Breast epithelium (tissue), 4 donors: ENCODE measurements at regions of chr5 and their contacts with region 1.

Region 1: GRCh38 chr5:163564321-163564938 is 59.0 kb downstream of the MAT2B start:
- DNase-seq: peak in 1 of 2 donors; percentile 38
- H3K4me3 ChIP-seq: no peak overlapping the region
- H3K27ac ChIP-seq: no peak overlapping the region
- H3K4me1 ChIP-seq: no peaks in the 10 kb centered on the region
- H3K27me3 ChIP-seq: no peaks in the 10 kb centered on the region
- CTCF ChIP-seq: peak; percentile 76 to 85 (median 78)
- POLR2A ChIP-seq: no peak

Region 2: GRCh38 chr5:163467644-163468355 is 96.6 kb before region 1 on chr5:
- intact Hi-C with region 1: loop called (anchors 5 kb)
- DNase-seq: no peak
- H3K4me3 ChIP-seq: no peak overlapping the region
- H3K27ac ChIP-seq: no peak overlapping the region
- H3K4me1 ChIP-seq: no peaks in the 10 kb centered on the region
- H3K27me3 ChIP-seq: no peaks in the 10 kb centered on the region
- CTCF ChIP-seq: no peak
- POLR2A ChIP-seq: no peak